Transverse colon (tissue), 4 donors: ENCODE measurements at regions of chr19 and their contacts with region 1.

Region 1: GRCh38 chr19:46944918-46945628 is 74.6 kb upstream of the NPAS1 start:
- DNase-seq: peak; percentile 46
- H3K4me3 ChIP-seq: no peak overlapping the region
- H3K27ac ChIP-seq: peak overlapping the region; percentile 78 to 81 (median 81)
- H3K4me1 ChIP-seq: peaks cover 25 to 51% (median 38%) of the 10 kb centered on the region in 4 donors
- H3K27me3 ChIP-seq: no peaks in the 10 kb centered on the region
- CTCF ChIP-seq: no peak
- EP300 ChIP-seq: no peak
- POLR2A ChIP-seq: no peak

Region 2: DNA sequence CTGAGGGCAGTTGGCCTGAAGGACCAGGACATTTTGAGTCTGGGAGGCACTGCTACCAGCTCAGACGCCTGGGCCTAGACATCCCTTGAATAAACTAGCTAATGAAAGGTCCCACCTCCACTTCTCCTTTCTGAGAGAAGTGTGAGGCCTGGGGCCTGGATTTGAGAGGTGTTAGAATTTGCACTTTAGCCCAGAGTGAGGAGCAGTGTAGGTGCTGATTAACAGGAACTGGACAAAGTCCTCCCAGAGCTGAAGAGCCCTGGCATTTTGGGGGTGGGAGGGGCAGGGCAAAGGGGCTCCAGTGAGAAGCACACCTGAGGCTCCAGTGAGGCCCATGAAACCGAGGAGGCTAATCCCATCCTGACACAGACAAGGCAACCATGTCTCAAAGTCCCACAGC is 141.5 kb before region 1 on chr19:
- in situ Hi-C with region 1: no loop called
- intact Hi-C with region 1: no loop called
- DNase-seq: peak; percentile 30
- H3K4me3 ChIP-seq: no peak overlapping the region
- H3K27ac ChIP-seq: peak overlapping the region in 2 of 4 donors; percentile 25 to 33
- H3K4me1 ChIP-seq: peaks cover 0 to 14% (median 7%) of the 10 kb centered on the region in 4 donors
- H3K27me3 ChIP-seq: no peaks in the 10 kb centered on the region
- CTCF ChIP-seq: no peak
- EP300 ChIP-seq: no peak
- POLR2A ChIP-seq: no peak

Region 3: GRCh38 chr19:46959894-46960556 is 15.0 kb after region 1 on chr19:
- in situ Hi-C with region 1: no loop called
- intact Hi-C with region 1: loop called (anchors 2 kb)
- DNase-seq: no peak
- H3K4me3 ChIP-seq: no peak overlapping the region
- H3K27ac ChIP-seq: no peak overlapping the region
- H3K4me1 ChIP-seq: peaks cover 2 to 21% (median 3%) of the 10 kb centered on the region in 4 donors
- H3K27me3 ChIP-seq: no peaks in the 10 kb centered on the region
- CTCF ChIP-seq: no peak
- EP300 ChIP-seq: no peak
- POLR2A ChIP-seq: no peak

Region 4: DNA sequence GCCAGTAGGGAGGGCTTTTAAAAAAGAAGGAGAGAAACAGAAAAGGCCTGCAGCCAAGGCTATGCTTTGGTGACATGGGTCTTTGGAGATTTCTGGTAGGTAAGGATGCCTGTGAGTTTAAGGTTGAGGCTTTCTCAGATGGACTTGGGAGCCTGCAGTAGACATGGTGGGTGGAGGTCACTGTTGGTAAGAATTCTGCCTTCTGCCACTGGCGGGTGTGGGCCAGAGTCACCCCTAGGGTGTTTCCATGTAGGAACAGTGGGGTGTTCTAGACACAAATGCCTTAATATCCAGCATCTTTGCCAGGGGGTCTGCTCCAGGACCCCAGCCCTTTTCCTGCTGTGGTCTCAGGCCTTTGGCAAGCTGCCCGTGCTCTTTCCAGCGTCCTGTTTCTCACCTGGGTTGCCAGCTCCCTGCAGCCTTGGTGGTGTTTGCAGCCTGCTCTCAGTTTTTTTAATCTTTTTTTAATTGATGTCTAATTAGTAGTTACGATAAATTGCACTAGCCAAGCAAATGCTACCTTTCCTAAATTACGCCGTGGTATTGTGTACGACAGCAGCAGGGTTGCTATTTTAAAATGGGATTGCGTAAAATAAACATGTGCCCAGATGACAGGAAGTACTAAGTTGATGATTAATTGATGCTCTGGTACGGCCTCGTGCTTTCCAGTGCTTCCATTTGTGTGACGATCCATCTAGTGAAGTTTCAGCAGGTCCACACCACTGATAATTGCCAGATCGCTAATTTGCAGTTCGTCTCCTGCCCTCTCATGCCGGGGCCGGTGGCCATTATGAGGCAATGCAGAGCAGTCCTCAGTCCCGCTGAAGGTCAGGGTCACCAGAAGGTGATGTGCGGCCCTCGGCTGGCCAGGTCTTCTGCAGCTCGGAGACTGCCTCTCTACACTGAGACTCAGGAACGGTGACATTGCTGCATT is 39.3 kb after region 1 on chr19:
- in situ Hi-C with region 1: no loop called
- intact Hi-C with region 1: no loop called
- DNase-seq: no peak
- H3K4me3 ChIP-seq: no peak overlapping the region
- H3K27ac ChIP-seq: peak overlapping the region in 1 of 4 donors; percentile 0
- H3K4me1 ChIP-seq: peaks cover 3 to 37% (median 22%) of the 10 kb centered on the region in 4 donors
- H3K27me3 ChIP-seq: no peaks in the 10 kb centered on the region
- CTCF ChIP-seq: no peak
- EP300 ChIP-seq: peak; percentile 76
- POLR2A ChIP-seq: no peak